Caco-2 (cell line): ENCODE measurements at regions of chr3 and their contacts with region 1.

Region 1: GRCh38 chr3:48635222-48636021 is at the start of gene SLC26A6:
- DNase-seq: peak; percentile 96 to 98
- H3K4me3 ChIP-seq: peak within 1 kb of the TSS; percentile 83
- H3K4me3 Mint-ChIP-seq: peak within 1 kb of the TSS; percentile 78
- H3K27ac Mint-ChIP-seq: peak within 1 kb of the TSS; percentile 59
- H3K4me1 ChIP-seq: peaks cover 19% of the 10 kb centered on the region
- H3K4me1 Mint-ChIP-seq: peaks cover 21% of the 10 kb centered on the region
- H3K27me3 ChIP-seq: no peaks in the 10 kb centered on the region
- H3K27me3 Mint-ChIP-seq: no peaks in the 10 kb centered on the region
- CTCF ChIP-seq: peak in 1 of 2 experiments; percentile 43
- total RNA-seq, gene SLC26A6: 54.7 and 59.4 TPM in 2 replicates

Region 2: DNA sequence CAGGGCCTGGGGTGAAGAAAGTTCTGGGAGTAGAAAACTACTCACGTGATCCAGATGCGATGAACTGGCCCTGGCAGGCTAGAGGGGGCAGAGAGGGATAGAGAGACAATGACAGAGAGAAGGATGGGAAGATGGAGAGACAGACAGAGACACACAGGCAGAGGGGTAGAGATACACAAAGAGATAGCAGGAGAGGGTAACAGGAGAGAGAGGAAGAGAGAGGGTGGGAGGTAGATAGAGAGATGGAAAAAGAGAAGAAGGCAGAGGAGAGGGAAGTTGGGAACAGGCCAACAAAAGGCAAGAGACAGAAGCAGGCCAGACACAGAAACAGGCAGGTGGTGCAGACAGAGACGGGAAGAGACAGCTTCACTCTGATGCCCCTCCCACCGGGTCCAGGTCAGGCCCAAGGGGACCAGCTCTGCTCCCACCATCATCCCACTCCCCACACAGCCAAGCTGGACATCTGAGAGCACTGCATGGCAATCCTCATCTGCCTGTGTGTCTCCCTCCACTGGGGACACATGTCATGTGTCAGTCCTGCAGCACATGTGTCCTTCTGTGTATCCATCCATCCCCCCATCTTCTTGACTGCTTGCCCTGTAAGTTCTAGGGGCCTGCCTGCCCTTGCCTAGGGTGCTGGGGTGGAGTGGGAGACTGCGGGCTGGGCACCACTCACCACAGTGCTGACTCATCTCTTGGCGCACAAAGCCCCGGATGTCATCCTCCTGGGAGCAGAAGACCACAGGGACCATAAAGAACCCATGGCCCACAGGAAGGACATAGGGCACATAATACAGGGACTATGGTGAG is 69.6 kb before region 1 on chr3:
- CTCF ChIA-PET with region 1: no interaction called
- POLR2A ChIA-PET with region 1: no interaction called
- intact Hi-C with region 1: no loop called
- DNase-seq: no peak
- H3K4me3 ChIP-seq: no peak overlapping the region
- H3K4me3 Mint-ChIP-seq: no peak overlapping the region
- H3K27ac Mint-ChIP-seq: no peak overlapping the region
- H3K4me1 ChIP-seq: no peaks in the 10 kb centered on the region
- H3K4me1 Mint-ChIP-seq: no peaks in the 10 kb centered on the region
- H3K27me3 ChIP-seq: no peaks in the 10 kb centered on the region
- H3K27me3 Mint-ChIP-seq: no peaks in the 10 kb centered on the region
- CTCF ChIP-seq: no peak

Region 3: GRCh38 chr3:48609088-48610005 is 26.1 kb before region 1 on chr3 and contains the start of gene UQCRC1:
- CTCF ChIA-PET with region 1: interaction called, 4 read pairs
- POLR2A ChIA-PET with region 1: no interaction called
- intact Hi-C with region 1: loop called (anchors 1 kb)
- DNase-seq: peak; percentile 91 to 95
- H3K4me3 ChIP-seq: peak within 1 kb of the TSS; percentile 87
- H3K4me3 Mint-ChIP-seq: peak within 1 kb of the TSS; percentile 91
- H3K27ac Mint-ChIP-seq: peak within 1 kb of the TSS; percentile 96
- H3K4me1 ChIP-seq: peaks cover 11% of the 10 kb centered on the region
- H3K4me1 Mint-ChIP-seq: peaks cover 7% of the 10 kb centered on the region
- H3K27me3 ChIP-seq: no peaks in the 10 kb centered on the region
- H3K27me3 Mint-ChIP-seq: no peaks in the 10 kb centered on the region
- CTCF ChIP-seq: peak; percentile 45 to 68
- total RNA-seq, gene UQCRC1: 278 and 283 TPM in 2 replicates

Region 4: GRCh38 chr3:48619541-48620517 is 15.6 kb before region 1 on chr3:
- CTCF ChIA-PET with region 1: interaction called, 7 read pairs
- POLR2A ChIA-PET with region 1: no interaction called
- intact Hi-C with region 1: loop called (anchors 2 kb)
- DNase-seq: no peak
- H3K4me3 ChIP-seq: no peak overlapping the region
- H3K4me3 Mint-ChIP-seq: no peak overlapping the region
- H3K27ac Mint-ChIP-seq: peak overlapping the region; percentile 68
- H3K4me1 ChIP-seq: peaks cover 14% of the 10 kb centered on the region
- H3K4me1 Mint-ChIP-seq: no peaks in the 10 kb centered on the region
- H3K27me3 ChIP-seq: no peaks in the 10 kb centered on the region
- H3K27me3 Mint-ChIP-seq: no peaks in the 10 kb centered on the region
- CTCF ChIP-seq: no peak